PC-9 (cell line): ENCODE measurements at regions of chr15 and their contacts with region 1.

Region 1: DNA sequence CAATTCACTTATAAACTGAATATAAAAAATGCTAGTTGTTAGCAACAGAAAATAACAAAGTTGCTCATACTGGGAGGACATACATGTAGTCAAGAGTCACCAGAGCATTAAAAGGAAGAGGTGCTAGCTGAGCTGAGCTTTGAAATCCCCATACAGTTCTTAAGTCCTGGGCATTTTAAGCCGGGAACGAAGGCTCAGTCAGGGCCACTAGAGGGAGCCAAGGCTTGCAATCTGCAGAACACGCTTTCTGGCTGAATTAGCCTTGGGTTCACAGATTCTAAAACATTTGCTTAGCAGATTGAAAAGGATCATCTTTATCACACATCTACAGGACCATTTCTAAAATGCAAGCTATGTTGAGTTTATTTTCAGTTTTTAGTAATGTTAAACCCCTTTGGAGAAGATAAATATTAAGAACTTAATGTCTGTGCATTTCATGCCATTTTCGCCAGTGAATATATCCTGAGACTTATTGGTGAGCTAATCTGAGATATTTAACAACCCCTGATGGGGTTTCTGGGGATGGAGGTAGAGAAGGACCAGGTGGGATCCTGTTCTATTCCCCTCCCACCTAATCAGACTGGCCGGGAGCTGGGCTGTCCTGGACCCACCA is 26.3 kb upstream of the MNS1 start:
- DNase-seq: peak; percentile 48 to 50
- H3K4me3 ChIP-seq: no peak overlapping the region
- H3K27ac ChIP-seq: no peak overlapping the region
- H3K4me1 ChIP-seq: no peaks in the 10 kb centered on the region; the same call in 1 of the 2 replicates
- H3K27me3 ChIP-seq: no peaks in the 10 kb centered on the region
- CTCF ChIP-seq: peak; percentile 78

Region 2: DNA sequence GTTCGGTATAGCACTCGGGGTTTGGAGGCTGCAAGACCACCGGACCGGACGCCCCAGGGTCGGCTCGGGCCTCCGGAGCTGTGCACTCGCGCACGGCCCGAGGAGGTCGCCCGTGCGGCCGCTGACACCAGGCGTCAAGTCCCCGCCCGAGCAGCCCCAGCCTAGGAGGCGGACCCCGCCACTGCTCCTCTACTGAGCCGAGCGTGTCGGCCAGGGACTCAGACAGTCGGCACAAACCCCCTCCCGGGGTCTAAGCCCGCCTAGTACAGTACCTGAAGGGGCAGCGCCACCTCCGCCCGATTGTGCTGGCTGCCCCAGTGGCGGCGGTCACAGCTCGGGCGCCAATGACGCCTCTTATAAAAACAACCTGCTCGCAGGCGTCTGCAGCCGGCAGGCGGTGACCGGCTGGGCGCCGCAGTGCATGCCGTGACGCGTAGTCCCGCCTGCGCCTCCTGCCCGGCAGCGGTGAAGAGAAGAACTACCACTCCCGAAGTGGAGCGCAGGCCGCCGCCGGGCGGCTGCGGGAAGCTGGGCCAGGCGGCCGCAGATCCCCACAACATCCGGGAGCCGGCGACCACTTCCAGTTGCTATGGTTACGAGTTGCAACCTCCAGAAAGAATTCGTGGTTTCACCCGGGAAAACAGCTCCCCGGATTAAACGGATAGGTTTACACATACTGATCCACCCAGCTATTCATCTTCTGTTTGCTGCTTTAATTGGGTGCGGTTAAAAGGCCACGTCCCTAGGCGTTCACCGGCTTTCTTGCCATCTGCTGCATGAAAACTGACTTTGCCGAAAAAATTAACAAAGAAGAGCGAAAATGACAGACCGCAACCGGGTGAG is 1083.0 kb before region 1 on chr15 and contains the starts of genes CCPG1 and PIERCE2:
- CTCF ChIA-PET with region 1: no interaction called
- POLR2A ChIA-PET with region 1: no interaction called
- intact Hi-C with region 1: no loop called
- DNase-seq: peak; percentile 79 to 94
- H3K4me3 ChIP-seq: peak within 1 kb of the TSS; percentile 75
- H3K27ac ChIP-seq: peak within 1 kb of the TSS; percentile 55
- H3K4me1 ChIP-seq: peaks cover 34% of the 10 kb centered on the region
- H3K27me3 ChIP-seq: no peaks in the 10 kb centered on the region
- CTCF ChIP-seq: peak; percentile 72
- total RNA-seq, gene CCPG1: 26.3 and 26.4 TPM in 2 replicates
- total RNA-seq, gene PIERCE2: 1.2 and 2.1 TPM in 2 replicates

Region 3: GRCh38 chr15:56325186-56325585 is 166.0 kb before region 1 on chr15:
- CTCF ChIA-PET with region 1: no interaction called
- POLR2A ChIA-PET with region 1: no interaction called
- intact Hi-C with region 1: no loop called
- DNase-seq: no peak
- H3K4me3 ChIP-seq: no peak overlapping the region
- H3K27ac ChIP-seq: no peak overlapping the region
- H3K4me1 ChIP-seq: peaks cover 6% of the 10 kb centered on the region; the same call in 1 of the 2 replicates
- H3K27me3 ChIP-seq: no peaks in the 10 kb centered on the region
- CTCF ChIP-seq: no peak

Region 4: DNA sequence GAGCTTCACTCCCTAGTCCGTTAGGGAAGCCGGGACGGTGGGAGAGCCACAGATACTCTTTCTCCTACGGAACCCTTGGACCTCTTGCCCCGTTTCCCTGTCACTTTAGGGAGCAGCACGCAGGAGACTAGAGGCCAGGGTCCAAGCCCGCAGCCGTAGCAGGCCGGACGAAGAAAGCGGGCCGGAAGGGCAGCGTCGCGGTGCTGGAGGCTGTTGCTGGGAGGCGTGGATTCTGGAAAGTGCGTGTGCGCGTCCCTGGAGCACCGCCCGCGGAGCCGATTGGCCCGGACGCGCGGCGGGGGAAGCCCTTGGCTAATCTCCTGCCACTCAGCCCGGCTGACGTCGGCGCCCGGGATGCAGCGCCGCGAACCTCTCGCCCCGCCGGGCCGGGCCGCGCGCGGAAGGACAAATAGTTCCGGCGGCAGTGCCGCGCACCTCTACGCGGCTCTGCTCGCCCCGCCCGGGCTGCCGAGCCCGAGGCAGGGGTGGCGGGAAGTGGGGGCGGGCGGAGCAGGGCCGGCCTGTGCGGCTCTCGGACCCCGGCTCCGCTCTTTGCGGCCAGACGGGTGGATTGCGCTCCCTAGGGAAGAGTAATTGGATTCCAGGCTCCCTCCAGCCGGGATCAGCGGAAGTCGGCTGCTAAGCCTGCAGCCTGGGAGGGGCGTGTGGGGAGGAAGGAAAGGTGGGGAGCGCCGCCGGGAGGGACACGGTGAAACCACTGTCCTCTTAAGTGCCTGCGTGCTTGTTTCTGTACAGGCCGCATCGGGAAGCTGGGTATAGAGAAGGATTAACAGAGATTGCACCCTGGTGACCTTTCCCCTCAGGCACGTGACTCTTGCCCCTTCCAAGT is 395.9 kb after region 1 on chr15:
- CTCF ChIA-PET with region 1: no interaction called
- POLR2A ChIA-PET with region 1: no interaction called
- intact Hi-C with region 1: loop called (anchors 10 kb)
- DNase-seq: peak; percentile 66 to 92
- H3K4me3 ChIP-seq: peak overlapping the region; percentile 74
- H3K27ac ChIP-seq: peak overlapping the region; percentile 62
- H3K4me1 ChIP-seq: peaks cover 17% of the 10 kb centered on the region
- H3K27me3 ChIP-seq: no peaks in the 10 kb centered on the region
- CTCF ChIP-seq: no peak

Region 5: DNA sequence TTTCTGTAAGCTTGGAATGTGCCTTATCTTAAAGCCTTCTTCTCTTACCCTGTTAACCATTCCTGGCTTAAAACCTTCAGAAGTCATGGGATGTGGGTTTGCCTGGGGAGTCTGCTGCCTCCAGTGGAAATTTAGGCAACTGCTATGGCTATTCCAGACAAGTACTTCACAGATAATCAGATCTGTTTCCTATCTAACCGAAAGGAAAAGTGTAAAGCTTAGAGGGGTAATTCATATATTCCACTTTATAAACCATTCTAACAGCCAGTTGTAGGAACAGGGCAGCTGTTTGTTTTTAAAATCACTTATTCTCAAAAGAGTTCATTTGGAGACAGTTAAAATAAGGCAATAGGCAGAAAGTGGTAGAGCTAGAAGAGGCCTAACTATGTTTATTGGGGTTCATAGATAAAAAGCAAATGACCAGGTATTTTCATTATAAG is 647.2 kb after region 1 on chr15:
- CTCF ChIA-PET with region 1: interaction called, 7 read pairs
- POLR2A ChIA-PET with region 1: no interaction called
- intact Hi-C with region 1: loop called (anchors 10 kb)
- DNase-seq: peak in 1 of 2 experiments; percentile 9
- H3K4me3 ChIP-seq: no peak overlapping the region
- H3K27ac ChIP-seq: no peak overlapping the region
- H3K4me1 ChIP-seq: no peaks in the 10 kb centered on the region
- H3K27me3 ChIP-seq: no peaks in the 10 kb centered on the region
- CTCF ChIP-seq: peak; percentile 74

Region 6: DNA sequence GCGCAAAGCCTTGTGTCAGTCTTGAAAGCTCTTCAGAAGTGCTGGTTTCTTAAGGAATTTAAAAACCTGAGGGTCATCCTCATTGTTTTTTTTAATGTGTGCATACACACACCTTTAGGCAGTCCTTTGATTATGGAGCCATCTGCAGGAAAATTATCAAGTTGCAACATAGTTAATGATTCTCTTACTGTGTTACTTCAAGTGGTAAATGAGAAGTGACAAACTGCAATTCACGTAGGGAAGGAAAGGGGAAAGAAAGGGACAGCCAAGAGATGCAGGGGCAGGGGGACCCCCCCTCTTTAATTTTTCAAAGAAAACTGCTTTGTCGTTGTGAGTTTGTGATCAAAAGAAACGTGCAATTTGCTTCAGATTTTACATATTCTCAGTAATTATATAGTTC is 722.6 kb after region 1 on chr15:
- CTCF ChIA-PET with region 1: no interaction called
- POLR2A ChIA-PET with region 1: no interaction called
- intact Hi-C with region 1: loop called (anchors 1 kb)
- DNase-seq: no peak
- H3K4me3 ChIP-seq: no peak overlapping the region
- H3K27ac ChIP-seq: no peak overlapping the region
- H3K4me1 ChIP-seq: no peaks in the 10 kb centered on the region; the same call in 1 of the 2 replicates
- H3K27me3 ChIP-seq: no peaks in the 10 kb centered on the region
- CTCF ChIP-seq: peak; percentile 37; the same call in 1 of the 2 replicates

Region 7: DNA sequence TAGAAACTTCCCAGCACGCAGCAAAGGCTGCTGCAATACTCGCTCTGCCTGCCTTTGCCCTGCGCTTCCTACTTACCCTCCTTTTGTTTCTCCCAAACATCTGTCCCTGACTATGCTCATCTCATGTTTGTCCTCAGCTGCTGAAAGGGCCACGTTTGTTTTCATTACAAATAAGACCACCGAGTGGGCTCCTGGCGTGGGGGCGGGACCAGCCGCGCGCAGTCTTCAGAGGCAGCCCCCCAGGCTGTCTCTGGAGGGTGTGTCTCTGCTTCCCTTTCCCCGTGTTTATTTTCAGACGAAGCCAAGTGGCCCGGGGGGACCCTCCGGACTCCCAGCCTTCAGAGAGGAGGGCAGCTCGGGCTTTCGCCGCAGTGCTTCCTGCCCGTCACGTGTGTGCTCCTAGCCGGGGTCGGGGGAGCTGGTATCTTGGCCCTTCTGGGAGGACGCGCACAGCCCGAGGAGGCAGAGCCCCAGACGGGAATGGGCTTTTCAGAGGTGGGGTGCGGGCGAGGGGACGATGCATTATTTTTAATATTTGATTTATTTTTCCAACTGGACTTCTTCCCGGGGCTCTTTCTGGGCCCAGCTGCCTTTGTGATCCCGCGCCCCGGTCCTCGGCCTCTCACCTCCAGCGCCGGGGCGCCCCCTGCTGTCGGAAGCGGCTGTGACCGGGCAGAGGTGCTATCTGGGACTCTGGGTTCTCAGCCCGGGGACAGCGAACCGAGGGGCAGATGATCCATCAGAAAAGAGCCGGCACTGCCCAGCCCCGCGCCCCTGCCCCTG is 815.1 kb after region 1 on chr15:
- CTCF ChIA-PET with region 1: interaction called, 6 read pairs
- POLR2A ChIA-PET with region 1: no interaction called
- intact Hi-C with region 1: loop called (anchors 1 kb)
- DNase-seq: peak in 1 of 2 experiments; percentile 78
- H3K4me3 ChIP-seq: no peak overlapping the region; the same call in 1 of the 2 replicates
- H3K27ac ChIP-seq: no peak overlapping the region
- H3K4me1 ChIP-seq: no peaks in the 10 kb centered on the region
- H3K27me3 ChIP-seq: no peaks in the 10 kb centered on the region
- CTCF ChIP-seq: peak; percentile 78